ENCODE measurements at regions of chr17 and their contacts with region 1.

Region 1: DNA sequence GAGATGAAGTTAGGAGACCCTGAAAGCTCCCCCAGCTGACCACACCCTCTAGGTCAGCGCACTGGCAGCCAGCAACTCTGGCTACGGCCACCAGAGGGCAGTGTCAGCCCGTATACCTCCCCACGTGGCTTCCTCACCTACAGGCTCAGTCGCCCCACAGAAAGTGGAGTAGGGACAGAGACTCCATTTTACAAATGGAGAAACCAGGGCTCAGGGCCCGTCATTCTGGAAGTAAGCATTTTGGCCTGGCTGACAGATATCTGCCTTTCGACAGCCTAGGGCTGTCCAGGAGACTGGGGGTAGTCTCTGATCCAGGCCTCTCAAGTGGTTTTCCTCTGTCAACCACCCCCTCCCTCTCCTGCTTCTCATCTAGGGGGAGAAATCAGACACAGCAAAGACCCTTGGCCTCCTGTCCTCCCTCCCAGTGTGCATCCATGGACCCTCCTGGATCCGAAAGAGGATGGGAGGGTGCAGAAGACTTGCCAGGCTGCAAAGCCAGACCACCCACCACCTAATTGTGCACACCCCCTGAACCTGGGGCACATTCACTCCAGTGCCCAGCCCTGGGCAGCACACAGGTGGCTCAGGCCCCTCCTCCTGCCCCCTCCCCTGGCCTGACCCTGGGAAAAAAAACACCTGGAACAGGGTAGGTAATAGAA is 3.8 kb upstream of the HAP1 start:
- DNase-seq: peak; percentile 78 to 93 (median 92)
- ATAC-seq: peak; percentile 78 to 86
- H3K4me3 ChIP-seq: no peak overlapping the region
- H3K27ac ChIP-seq: no peak overlapping the region
- H3K4me1 ChIP-seq: no peaks in the 10 kb centered on the region
- H3K27me3 ChIP-seq: no peaks in the 10 kb centered on the region

Region 2: GRCh38 chr17:41801374-41802271 is 63.4 kb after region 1 on chr17:
- intact Hi-C with region 1: loop called (anchors 1 to 2 kb)
- DNase-seq: peak; percentile 77 to 94 (median 91)
- ATAC-seq: peak; percentile 78 to 83
- H3K4me3 ChIP-seq: no peak overlapping the region
- H3K27ac ChIP-seq: no peak overlapping the region
- H3K4me1 ChIP-seq: no peaks in the 10 kb centered on the region
- H3K27me3 ChIP-seq: no peaks in the 10 kb centered on the region

Region 3: DNA sequence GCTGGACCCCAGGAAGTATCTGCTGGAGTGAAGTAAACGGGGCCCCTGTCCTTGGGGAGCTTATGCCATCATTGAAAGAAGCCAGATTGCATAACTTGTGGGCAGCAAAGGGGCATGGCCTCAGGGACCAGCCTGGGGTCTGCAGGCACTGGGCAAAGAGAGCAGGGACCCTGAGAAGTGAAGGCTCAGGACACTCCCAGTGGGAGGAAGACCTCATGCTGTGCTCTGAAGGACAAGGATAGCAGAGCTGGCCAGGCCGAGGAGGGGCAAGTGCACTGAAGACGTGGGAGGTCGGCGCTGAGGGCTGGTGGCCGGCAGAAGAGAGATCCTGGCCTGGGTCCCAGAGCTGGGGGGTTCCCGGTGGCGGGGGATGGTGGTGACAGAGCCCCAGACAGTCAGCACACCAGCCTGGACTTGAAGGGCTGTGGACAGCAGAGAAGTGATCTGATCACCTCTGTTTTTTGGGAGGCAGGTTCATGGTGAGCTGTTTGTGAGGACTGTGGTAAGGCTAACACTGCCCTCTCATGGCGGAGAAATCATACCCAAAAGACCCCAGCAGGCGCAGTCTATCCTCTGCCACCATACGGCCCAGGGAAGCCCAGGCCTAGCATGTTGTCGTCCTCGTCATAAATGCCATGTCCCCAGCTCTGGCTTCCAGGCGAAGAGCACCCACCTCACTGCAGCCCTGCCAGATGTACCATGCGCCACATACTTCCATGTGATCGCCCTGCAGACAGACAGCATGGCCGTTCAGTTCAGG is 221.3 kb after region 1 on chr17:
- intact Hi-C with region 1: loop called in 1 of 4 experiments (anchors 10 kb)
- DNase-seq: peak in 1 of 3 donors; percentile 63
- ATAC-seq: peak; percentile 39 to 50
- H3K4me3 ChIP-seq: no peak overlapping the region
- H3K27ac ChIP-seq: no peak overlapping the region
- H3K4me1 ChIP-seq: no peaks in the 10 kb centered on the region
- H3K27me3 ChIP-seq: no peaks in the 10 kb centered on the region

Measured in right cardiac atrium (tissue), 5 donors.